B cell (primary cell): ENCODE measurements at regions of chr9 and their contacts with region 1.

Region 1: GRCh38 chr9:136631038-136632000 is 31.4 kb upstream of the EGFL7 start:
- DNase-seq: peak; percentile 88
- ATAC-seq: peak; percentile 87
- H3K4me3 ChIP-seq: no peak overlapping the region
- H3K4me3 Mint-ChIP-seq: no peak overlapping the region
- H3K27ac ChIP-seq: no peak overlapping the region
- H3K27ac Mint-ChIP-seq: no peak overlapping the region
- H3K4me1 ChIP-seq: peaks cover 11 to 21% of the 10 kb centered on the region in 2 donors
- H3K4me1 Mint-ChIP-seq: no peaks in the 10 kb centered on the region
- H3K27me3 ChIP-seq: peaks cover 0 to 25% (median 3%) of the 10 kb centered on the region in 4 experiments
- H3K27me3 Mint-ChIP-seq: peaks cover 10% of the 10 kb centered on the region
- CTCF ChIP-seq: peak; percentile 85

Region 2: GRCh38 chr9:136339173-136339957 is 292.0 kb before region 1 on chr9:
- CTCF ChIA-PET with region 1: no interaction called
- POLR2A ChIA-PET with region 1: no interaction called
- intact Hi-C with region 1: loop called (anchors 2 kb)
- DNase-seq: peak; percentile 55
- ATAC-seq: peak; percentile 60
- H3K4me3 ChIP-seq: no peak overlapping the region
- H3K4me3 Mint-ChIP-seq: no peak overlapping the region
- H3K27ac ChIP-seq: no peak overlapping the region
- H3K27ac Mint-ChIP-seq: no peak overlapping the region
- H3K4me1 ChIP-seq: peaks cover 3 to 6% of the 10 kb centered on the region in 2 donors
- H3K4me1 Mint-ChIP-seq: peaks cover 9% of the 10 kb centered on the region
- H3K27me3 ChIP-seq: no peaks in the 10 kb centered on the region
- H3K27me3 Mint-ChIP-seq: no peaks in the 10 kb centered on the region
- CTCF ChIP-seq: peak; percentile 77

Region 3: DNA sequence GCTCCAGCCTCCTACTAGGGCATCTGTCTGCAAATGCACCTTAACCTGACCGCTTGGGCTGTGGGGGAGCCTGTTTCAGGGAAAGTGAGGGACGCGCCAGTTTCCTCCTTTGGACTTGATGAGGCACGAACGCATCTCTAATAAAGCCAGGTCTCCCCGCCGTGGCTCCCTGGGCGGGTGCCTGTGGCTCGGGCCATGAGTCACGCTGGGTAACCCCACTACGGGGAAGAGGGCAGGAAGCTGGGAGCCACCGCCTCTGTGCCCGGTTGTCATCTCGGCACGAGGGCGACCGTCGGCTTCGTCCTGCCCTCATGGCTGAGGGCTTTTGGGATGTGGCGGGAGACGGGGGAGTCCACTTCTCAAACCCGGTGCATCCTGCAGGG is 97.6 kb before region 1 on chr9:
- CTCF ChIA-PET with region 1: interaction called, 12 read pairs
- POLR2A ChIA-PET with region 1: no interaction called
- intact Hi-C with region 1: loop called (anchors 2 kb)
- DNase-seq: peak; percentile 58
- ATAC-seq: peak; percentile 42
- H3K4me3 ChIP-seq: peak overlapping the region in 1 of 5 experiments; percentile 6
- H3K4me3 Mint-ChIP-seq: peak overlapping the region; percentile 67
- H3K27ac ChIP-seq: peak overlapping the region in 1 of 2 donors; percentile 18
- H3K27ac Mint-ChIP-seq: peak overlapping the region; percentile 41
- H3K4me1 ChIP-seq: peaks cover 91 to 95% of the 10 kb centered on the region in 2 donors
- H3K4me1 Mint-ChIP-seq: peaks cover 72% of the 10 kb centered on the region
- H3K27me3 ChIP-seq: no peaks in the 10 kb centered on the region
- H3K27me3 Mint-ChIP-seq: no peaks in the 10 kb centered on the region
- CTCF ChIP-seq: no peak

Region 4: DNA sequence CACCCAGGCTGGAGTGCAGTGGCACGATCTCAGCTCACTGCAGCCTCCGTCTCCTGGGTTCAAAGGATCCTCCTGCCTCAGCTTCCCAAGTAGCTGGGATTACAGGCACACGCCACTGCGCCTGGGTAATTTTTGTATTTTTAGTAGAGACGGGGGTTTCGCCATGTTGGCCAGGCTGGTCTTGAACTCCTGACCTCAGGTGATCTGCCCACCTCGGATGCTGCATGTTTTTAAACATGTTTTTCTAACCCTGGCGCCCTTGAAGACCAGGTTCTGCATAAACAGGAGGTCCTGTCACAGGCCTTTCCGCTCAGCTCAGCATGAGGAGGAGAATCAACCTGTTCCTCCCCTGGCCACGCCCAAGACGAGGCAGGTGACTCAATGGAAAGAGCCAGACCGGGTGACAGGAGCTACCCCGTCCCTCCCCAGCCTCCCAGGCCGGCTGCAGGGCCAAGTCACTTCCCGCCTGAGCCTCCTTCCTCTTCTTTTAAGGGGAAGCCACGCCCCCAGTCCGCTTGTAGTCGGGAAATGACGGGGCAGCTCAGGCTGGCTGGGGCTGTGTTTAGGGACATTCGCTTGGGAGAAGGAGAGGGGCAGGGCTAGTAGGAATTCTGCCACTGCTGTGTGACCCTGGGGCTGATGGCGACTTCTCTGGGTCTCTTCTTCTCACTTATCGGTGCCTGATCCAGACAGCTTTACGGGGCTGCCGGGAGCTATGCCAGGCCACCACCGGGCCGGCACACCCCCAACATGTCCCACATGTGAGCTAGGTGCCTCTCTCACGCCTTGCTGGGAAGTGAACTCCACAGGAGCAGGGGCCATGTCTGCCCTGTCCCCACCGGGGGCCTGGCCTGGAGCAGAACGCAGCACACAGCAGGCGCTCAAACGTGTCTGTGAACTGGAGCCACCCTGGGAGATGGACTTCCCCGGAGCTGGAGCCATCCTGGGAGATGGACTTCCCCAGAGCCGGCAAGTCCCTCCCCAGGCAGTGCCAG is 91.6 kb before region 1 on chr9:
- CTCF ChIA-PET with region 1: interaction called, 10 read pairs
- POLR2A ChIA-PET with region 1: no interaction called
- intact Hi-C with region 1: loop called (anchors 2 kb)
- DNase-seq: peak; percentile 85
- ATAC-seq: peak; percentile 69
- H3K4me3 ChIP-seq: peak overlapping the region in 4 of 5 experiments; percentile 7 to 48 (median 26)
- H3K4me3 Mint-ChIP-seq: peak overlapping the region; percentile 83
- H3K27ac ChIP-seq: peak overlapping the region; percentile 57 to 80
- H3K27ac Mint-ChIP-seq: peak overlapping the region; percentile 89
- H3K4me1 ChIP-seq: peaks cover 63 to 75% of the 10 kb centered on the region in 2 donors
- H3K4me1 Mint-ChIP-seq: peaks cover 73% of the 10 kb centered on the region
- H3K27me3 ChIP-seq: no peaks in the 10 kb centered on the region
- H3K27me3 Mint-ChIP-seq: no peaks in the 10 kb centered on the region
- CTCF ChIP-seq: no peak

Region 5: DNA sequence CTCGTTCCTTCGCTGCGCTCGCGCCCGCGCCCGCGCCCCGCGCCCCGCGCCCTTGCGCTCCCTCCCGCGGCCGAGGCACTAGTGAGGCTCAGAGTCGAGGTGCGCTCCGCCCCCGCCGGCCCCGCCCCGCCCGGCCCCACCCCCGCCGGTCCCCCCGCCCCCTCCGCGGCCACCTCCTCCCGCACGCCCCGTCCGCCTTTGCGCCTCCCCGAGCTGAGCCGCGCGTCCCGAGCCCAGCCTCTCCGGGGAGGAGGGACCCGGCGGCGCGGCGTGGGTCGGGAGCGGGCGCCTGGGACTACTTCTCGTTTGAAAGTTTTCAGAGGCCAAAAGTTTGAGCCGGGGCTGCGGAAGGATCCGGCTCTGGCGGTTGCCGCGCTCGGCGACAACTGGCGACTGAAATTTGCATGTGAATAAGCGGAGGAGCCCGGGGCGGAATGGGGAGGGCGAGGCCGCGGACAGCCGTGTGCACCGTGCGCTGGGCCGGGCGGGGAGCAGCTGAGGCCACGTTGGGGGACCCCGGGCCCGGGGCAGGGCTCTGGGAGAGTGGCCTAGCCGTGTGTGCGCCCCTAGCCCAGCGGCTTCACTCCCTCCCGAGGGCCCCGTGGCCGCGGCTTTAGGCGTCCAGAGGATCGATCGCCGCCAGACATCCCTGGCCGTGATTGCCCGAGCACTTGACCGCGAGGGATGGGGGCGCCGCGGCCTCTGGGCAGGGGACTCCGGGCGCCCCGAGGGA is 85.2 kb before region 1 on chr9 and contains the start of gene NOTCH1:
- CTCF ChIA-PET with region 1: interaction called, 5 read pairs
- POLR2A ChIA-PET with region 1: no interaction called
- intact Hi-C with region 1: loop called (anchors 2 kb)
- DNase-seq: peak; percentile 93
- ATAC-seq: peak; percentile 72
- H3K4me3 ChIP-seq: peak within 1 kb of the TSS; percentile 51 to 88 (median 70)
- H3K4me3 Mint-ChIP-seq: peak within 1 kb of the TSS; percentile 92
- H3K27ac ChIP-seq: peak within 1 kb of the TSS; percentile 33 to 75
- H3K27ac Mint-ChIP-seq: peak within 1 kb of the TSS; percentile 94
- H3K4me1 ChIP-seq: peaks cover 30 to 44% of the 10 kb centered on the region in 2 donors
- H3K4me1 Mint-ChIP-seq: peaks cover 34% of the 10 kb centered on the region
- H3K27me3 ChIP-seq: no peaks in the 10 kb centered on the region
- H3K27me3 Mint-ChIP-seq: no peaks in the 10 kb centered on the region
- CTCF ChIP-seq: no peak
- total RNA-seq, gene NOTCH1: 38.5 and 40.6 TPM in 2 replicates

Region 6: DNA sequence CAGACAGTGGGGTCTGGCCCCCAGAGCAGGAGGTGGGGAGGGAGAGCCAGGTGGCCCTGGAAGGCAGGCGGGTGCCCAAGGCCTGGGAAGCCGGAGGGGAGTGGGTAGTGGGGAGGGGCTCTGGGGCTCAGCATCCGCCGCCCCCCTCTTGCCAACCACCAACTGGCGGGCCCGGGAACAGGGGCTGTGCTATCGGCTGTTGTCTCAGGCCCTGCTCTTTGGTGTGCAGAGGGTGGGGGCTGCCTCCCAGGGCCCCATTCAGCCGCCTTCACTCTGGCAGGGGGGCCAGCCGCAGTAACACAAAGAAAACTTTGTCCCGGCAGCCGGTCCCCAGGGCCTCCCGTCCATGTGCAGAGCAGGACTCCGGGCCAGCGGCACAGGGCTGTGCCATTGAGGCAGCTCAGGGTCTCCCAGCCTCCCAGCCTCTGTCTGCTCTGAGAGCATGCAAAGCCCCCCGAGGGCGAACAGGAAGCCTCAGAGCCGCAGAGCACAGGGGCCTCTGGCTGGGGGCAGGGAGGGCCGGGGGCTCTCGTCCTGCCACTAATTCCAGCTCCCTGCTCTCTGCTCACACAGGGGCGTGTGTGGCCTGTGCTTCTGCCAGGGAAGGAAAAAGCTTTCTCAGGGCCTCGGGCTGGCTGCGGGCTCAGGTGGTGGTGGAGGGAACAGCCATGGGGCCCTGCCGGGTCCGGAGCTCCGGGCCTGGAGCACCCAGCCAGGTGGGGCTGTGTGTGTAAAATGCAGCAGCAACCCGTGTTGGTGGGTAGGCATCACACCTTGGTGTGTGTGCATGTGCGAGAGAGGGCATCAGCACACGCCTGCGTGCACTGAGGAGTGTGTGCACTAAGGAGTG is 31.3 kb before region 1 on chr9:
- CTCF ChIA-PET with region 1: no interaction called
- POLR2A ChIA-PET with region 1: no interaction called
- intact Hi-C with region 1: no loop called
- DNase-seq: no peak
- ATAC-seq: no peak
- H3K4me3 ChIP-seq: no peak overlapping the region
- H3K4me3 Mint-ChIP-seq: no peak overlapping the region
- H3K27ac ChIP-seq: no peak overlapping the region
- H3K27ac Mint-ChIP-seq: no peak overlapping the region
- H3K4me1 ChIP-seq: peaks cover 6 to 10% of the 10 kb centered on the region in 2 donors
- H3K4me1 Mint-ChIP-seq: peaks cover 3% of the 10 kb centered on the region
- H3K27me3 ChIP-seq: peaks cover 0 to 46% (median 6%) of the 10 kb centered on the region in 4 experiments
- H3K27me3 Mint-ChIP-seq: peaks cover 5% of the 10 kb centered on the region
- CTCF ChIP-seq: no peak